Psoas muscle (tissue), 8 donors: ENCODE measurements at regions of chr2 and their contacts with region 1.

Region 1: DNA sequence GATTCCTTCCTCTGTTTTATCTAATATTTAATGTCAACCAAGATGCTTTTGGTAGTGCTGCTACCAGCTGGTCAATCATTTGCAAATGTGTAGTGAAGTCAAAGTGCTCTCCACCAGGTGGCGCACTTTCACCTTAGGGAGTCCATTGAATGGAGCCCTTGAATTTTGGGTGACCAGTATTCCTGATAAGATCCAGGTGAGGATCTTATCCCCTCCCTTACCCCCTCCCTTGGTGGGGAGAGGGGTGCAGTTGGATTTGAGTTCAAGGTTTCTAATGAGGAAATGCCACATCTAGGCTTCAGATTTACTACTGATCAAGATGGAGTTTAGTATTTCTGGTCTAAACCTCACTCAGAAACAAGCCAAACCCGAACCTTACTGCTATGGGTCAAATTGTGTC is 12.0 kb upstream of the E2F6 start:
- DNase-seq: peak; percentile 88 to 92
- ATAC-seq: peak; percentile 63 to 82 (median 77)
- H3K4me3 ChIP-seq: no peak overlapping the region
- H3K27ac ChIP-seq: no peak overlapping the region
- H3K4me1 ChIP-seq: no peaks in the 10 kb centered on the region
- H3K27me3 ChIP-seq: peaks cover 0 to 4% (median 0%) of the 10 kb centered on the region in 3 donors
- CTCF ChIP-seq: peak; percentile 95

Region 2: DNA sequence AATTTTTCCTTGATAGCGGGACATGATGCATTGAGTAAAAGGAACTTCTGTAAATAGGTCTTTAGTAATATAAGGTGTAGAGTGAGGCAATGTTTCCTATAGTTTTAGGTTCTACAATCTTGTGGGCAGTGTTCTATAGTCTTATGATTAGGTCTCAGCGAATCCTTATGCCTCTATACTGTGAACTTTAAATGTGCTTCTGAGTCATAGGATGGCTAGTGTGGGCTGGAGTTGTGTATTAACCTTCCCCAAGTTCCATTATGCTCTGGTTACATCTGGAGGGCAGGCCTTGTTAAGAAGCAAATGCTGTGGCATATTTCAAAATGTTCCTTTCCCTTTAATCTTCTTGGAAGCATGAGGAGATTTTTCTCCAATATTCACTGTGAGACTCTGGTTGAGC is 207.1 kb before region 1 on chr2:
- intact Hi-C with region 1: no loop called
- DNase-seq: no peak
- ATAC-seq: peak in 1 of 4 donors; percentile 30
- H3K4me3 ChIP-seq: no peak overlapping the region
- H3K27ac ChIP-seq: no peak overlapping the region
- H3K4me1 ChIP-seq: peaks cover 17% of the 10 kb centered on the region
- H3K27me3 ChIP-seq: no peaks in the 10 kb centered on the region
- CTCF ChIP-seq: no peak

Region 3: DNA sequence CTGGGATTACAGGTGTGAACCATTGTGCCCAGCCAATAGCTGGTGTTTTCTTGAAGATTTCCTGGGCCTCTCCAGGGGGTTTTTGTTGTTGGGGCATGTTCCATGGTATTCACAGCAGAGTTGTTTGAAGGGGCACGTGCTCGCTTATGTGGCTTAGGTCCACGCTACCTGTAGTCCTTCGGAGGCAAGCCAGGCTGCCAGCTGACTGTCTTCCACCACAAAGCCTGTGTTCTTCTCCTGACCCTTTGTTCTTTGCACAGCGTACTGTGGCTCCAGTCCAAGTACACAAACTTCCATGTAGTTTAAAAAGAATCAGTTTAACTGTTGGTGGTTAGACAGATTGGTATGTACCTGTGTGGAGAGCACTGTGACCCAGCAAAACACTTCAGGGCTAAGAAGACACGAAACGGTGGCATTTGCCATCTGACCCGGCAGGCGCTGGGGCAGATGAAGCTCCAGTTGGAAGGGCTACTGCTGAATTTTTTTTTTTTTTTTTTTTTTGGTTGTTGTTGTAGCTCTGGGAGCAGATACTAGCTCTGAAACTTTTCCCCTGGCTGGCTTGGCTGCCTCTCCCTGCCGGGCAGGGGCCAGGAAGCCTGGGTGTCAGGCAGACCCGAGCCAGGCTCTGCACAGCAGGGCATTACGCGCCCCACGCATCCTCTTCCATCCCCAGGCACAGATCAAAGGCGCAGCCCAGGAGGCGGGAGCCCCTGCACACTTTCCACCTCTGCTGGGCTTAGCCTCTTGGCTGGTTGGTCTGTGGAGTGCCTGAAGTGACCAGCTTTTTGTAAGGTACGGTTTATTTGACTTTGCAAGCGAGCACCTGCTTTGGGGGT is 61.5 kb after region 1 on chr2:
- intact Hi-C with region 1: loop called in 1 of 2 experiments (anchors 10 kb)
- DNase-seq: no peak
- ATAC-seq: peak; percentile 18 to 55 (median 40)
- H3K4me3 ChIP-seq: peak overlapping the region; percentile 34
- H3K27ac ChIP-seq: peak overlapping the region; percentile 53
- H3K4me1 ChIP-seq: peaks cover 30% of the 10 kb centered on the region
- H3K27me3 ChIP-seq: no peaks in the 10 kb centered on the region
- CTCF ChIP-seq: no peak

Region 4: DNA sequence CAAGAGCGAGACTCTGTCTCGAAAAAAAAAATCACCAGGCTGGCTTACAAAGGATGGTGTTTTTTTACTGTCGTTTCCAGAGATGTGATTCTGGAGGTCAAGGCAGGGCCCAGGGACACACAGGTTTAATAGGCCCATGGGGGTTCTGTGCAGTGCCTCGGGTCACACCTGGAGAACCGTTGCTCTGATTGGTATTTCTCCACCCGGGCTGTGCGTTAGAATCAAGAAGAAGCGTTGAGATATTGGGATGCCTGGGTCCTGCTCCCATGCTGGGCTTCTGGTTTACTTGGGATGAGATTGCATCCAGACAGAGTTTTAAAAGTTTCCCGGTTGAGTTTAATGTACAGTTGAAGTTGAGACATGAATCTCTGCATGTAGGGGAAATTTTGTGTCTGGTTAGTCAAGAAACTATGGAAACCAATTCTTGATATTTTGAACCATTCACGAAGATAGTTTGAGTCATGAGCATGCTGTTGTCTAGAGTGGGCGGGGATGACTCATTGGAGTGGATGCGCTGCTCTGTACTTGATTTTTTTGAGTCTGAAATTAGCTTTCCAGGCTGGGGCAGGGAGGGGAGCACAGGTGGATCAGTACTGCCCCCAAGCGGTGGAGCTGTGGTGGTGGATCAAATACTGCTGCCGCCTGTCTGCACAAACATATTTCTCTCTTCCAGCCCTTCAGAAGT is 106.0 kb after region 1 on chr2:
- intact Hi-C with region 1: loop called (anchors 1 to 2 kb)
- DNase-seq: peak; percentile 72 to 84
- ATAC-seq: peak; percentile 72 to 79 (median 76)
- H3K4me3 ChIP-seq: no peak overlapping the region
- H3K27ac ChIP-seq: peak overlapping the region; percentile 58
- H3K4me1 ChIP-seq: peaks cover 7% of the 10 kb centered on the region
- H3K27me3 ChIP-seq: no peaks in the 10 kb centered on the region
- CTCF ChIP-seq: peak; percentile 87

Region 5: GRCh38 chr2:11681722-11682589 is 204.0 kb after region 1 on chr2:
- intact Hi-C with region 1: loop called (anchors 5 to 10 kb)
- DNase-seq: peak; percentile 46 to 86
- ATAC-seq: peak; percentile 66 to 75 (median 71)
- H3K4me3 ChIP-seq: no peak overlapping the region
- H3K27ac ChIP-seq: peak overlapping the region; percentile 83
- H3K4me1 ChIP-seq: peaks cover 71% of the 10 kb centered on the region
- H3K27me3 ChIP-seq: no peaks in the 10 kb centered on the region
- CTCF ChIP-seq: peak; percentile 93

Region 6: GRCh38 chr2:11688222-11689069 is 210.5 kb after region 1 on chr2:
- intact Hi-C with region 1: loop called (anchors 5 to 10 kb)
- DNase-seq: peak; percentile 90 to 93
- ATAC-seq: peak; percentile 80 to 86 (median 84)
- H3K4me3 ChIP-seq: peak overlapping the region; percentile 57
- H3K27ac ChIP-seq: peak overlapping the region; percentile 90
- H3K4me1 ChIP-seq: peaks cover 54% of the 10 kb centered on the region
- H3K27me3 ChIP-seq: no peaks in the 10 kb centered on the region
- CTCF ChIP-seq: peak; percentile 82

Region 7: GRCh38 chr2:11778923-11779757 is 301.1 kb after region 1 on chr2:
- intact Hi-C with region 1: loop called in 1 of 2 experiments (anchors 10 kb)
- DNase-seq: peak; percentile 85 to 92
- ATAC-seq: peak; percentile 86 to 95 (median 88)
- H3K4me3 ChIP-seq: peak overlapping the region; percentile 12
- H3K27ac ChIP-seq: peak overlapping the region; percentile 65
- H3K4me1 ChIP-seq: peaks cover 36% of the 10 kb centered on the region
- H3K27me3 ChIP-seq: no peaks in the 10 kb centered on the region
- CTCF ChIP-seq: peak; percentile 99